CD4-positive, alpha-beta memory T cell (primary cell): ENCODE measurements at regions of chr12 and their contacts with region 1.

Region 1: DNA sequence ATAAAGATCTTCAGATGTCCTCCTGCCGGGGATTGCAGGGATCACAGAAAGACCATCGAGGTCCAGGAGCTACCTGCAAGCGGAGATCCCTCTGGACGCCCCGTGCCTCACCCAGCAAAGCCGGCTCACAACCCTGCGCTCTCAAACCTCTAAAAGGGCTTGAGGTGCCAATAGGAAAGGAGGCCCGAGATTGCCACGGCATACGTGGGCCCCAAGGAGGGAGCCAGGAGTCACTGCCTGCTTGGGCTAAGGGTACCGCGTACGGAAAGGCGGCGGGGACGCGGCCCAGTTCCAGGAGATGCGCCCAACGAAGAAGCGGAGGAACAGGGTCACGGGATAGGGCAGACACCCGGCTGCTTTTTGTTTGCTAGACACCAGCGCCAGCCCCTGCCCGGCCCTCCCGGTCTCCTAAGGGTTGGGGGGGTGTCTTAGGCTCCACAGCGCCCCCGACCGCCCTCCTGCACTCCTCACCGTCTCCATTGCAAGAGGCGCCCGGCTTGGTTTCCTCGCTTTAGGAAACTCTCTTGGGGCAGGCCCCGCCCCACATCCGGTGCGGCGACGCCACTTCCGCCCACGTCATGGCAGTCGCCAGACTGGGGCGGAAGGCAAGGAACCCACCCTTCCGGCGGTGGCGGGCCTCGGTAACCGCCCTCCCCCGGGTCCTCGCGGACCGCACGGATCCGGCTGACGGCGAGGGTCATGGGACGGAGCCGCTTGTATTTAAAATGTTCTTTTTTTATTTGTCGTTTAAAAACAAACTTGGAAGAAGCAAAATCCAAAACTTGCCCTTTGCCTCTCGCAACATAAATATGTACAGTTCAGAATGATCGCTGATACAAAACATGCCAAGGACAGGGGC is at the start of gene PRKAG1:
- DNase-seq: peak; percentile 97 to 98 (median 98)
- H3K4me3 ChIP-seq: peak within 1 kb of the TSS; percentile 94 to 96
- H3K4me3 Mint-ChIP-seq: peak within 1 kb of the TSS; percentile 87 to 99 (median 94)
- H3K27ac ChIP-seq: peak within 1 kb of the TSS; percentile 95
- H3K27ac Mint-ChIP-seq: peak within 1 kb of the TSS; percentile 95 to 100 (median 99)
- H3K4me1 ChIP-seq: peaks cover 24% of the 10 kb centered on the region
- H3K4me1 Mint-ChIP-seq: peaks cover 18 to 51% (median 37%) of the 10 kb centered on the region in 4 donors
- H3K27me3 ChIP-seq: no peaks in the 10 kb centered on the region
- H3K27me3 Mint-ChIP-seq: no peaks in the 10 kb centered on the region
- total RNA-seq, gene PRKAG1: 48.9 to 53.7 TPM

Region 2: DNA sequence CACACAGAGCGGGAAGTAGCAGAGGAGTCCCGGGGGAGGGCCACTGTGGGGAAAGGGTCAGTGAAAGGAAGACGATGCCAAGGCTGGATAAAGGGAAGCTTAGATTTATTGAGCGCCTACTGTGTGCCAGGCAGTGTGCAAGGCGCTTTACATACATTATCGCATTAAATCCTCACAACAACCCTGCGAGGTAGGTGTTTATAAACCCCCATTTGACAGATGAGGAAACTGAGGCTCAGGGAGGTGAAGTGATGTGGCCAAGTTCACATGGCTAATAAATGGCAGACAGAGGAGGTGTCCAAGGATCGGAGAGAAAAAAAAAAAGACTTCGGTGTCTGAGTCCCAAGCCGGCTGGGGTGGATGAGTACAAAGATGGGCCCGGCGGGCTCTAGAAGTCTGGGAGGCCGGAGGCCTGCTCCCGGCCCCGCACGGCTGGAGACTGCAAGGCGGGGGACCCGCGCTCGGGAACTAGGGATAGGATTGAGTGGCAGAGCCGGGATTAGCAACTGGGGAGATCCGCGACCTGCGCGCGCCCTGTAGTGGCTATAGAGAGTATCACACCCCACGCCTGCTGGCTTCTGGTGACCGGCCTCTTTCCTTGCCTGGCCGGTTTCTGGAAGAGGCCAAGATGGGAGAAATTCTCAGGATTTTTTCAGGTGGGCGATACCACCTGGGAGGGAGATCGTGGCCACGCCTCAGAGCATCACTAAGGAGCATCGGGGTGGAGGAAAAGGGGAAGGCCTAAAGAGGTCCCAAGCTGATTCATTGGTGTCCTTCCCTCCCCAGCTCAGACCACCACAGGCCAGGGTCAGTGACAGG is 23.2 kb before region 1 on chr12:
- CTCF ChIA-PET with region 1: interaction called, 67 read pairs
- POLR2A ChIA-PET with region 1: interaction called, 8 read pairs
- intact Hi-C with region 1: loop called (anchors 1 kb)
- DNase-seq: peak; percentile 31 to 53 (median 40)
- H3K4me3 ChIP-seq: no peak overlapping the region
- H3K4me3 Mint-ChIP-seq: peak overlapping the region in 6 of 8 donors; percentile 47 to 92 (median 69)
- H3K27ac ChIP-seq: no peak overlapping the region
- H3K27ac Mint-ChIP-seq: peak overlapping the region in 5 of 7 donors; percentile 51 to 93 (median 89)
- H3K4me1 ChIP-seq: peaks cover 40% of the 10 kb centered on the region
- H3K4me1 Mint-ChIP-seq: peaks cover 13 to 44% (median 25%) of the 10 kb centered on the region in 4 donors
- H3K27me3 ChIP-seq: peaks cover 18% of the 10 kb centered on the region
- H3K27me3 Mint-ChIP-seq: peaks cover 34 to 43% of the 10 kb centered on the region in 2 donors